ENCODE measurements at regions of chr10 and their contacts with region 1.

Region 1: GRCh38 chr10:74151056-74151878 is at the start of gene ADK:
- DNase-seq: peak in 8 of 9 donors; percentile 96 to 100 (median 99)
- ATAC-seq: peak; percentile 99
- H3K4me3 ChIP-seq: peak within 1 kb of the TSS; percentile 90
- H3K4me3 Mint-ChIP-seq: no peak within 1 kb of the TSS
- H3K27ac ChIP-seq: peak within 1 kb of the TSS; percentile 84
- H3K27ac Mint-ChIP-seq: peak within 1 kb of the TSS in 5 of 9 donors; percentile 8 to 78 (median 47)
- H3K4me1 ChIP-seq: peaks cover 17 to 23% of the 10 kb centered on the region in 2 donors
- H3K4me1 Mint-ChIP-seq: peaks cover 36 to 56% (median 47%) of the 10 kb centered on the region in 7 donors
- H3K27me3 ChIP-seq: no peaks in the 10 kb centered on the region
- H3K27me3 Mint-ChIP-seq: no peaks in the 10 kb centered on the region
- total RNA-seq, gene ADK: 20.7 to 32.6 (median 25.0) TPM

Region 2: GRCh38 chr10:73874267-73875138 is 276.8 kb before region 1 on chr10 and contains the start of gene CAMK2G:
- CTCF ChIA-PET with region 1: no interaction called
- POLR2A ChIA-PET with region 1: no interaction called
- intact Hi-C with region 1: loop called (anchors 2 kb)
- DNase-seq: peak; percentile 68 to 86 (median 83)
- ATAC-seq: peak; percentile 91
- H3K4me3 ChIP-seq: peak within 1 kb of the TSS; percentile 94
- H3K4me3 Mint-ChIP-seq: peak within 1 kb of the TSS; percentile 83 to 96 (median 90)
- H3K27ac ChIP-seq: peak within 1 kb of the TSS; percentile 86
- H3K27ac Mint-ChIP-seq: peak within 1 kb of the TSS; percentile 81 to 97 (median 94)
- H3K4me1 ChIP-seq: peaks cover 30 to 48% of the 10 kb centered on the region in 2 donors
- H3K4me1 Mint-ChIP-seq: peaks cover 41 to 84% (median 74%) of the 10 kb centered on the region in 7 donors
- H3K27me3 ChIP-seq: no peaks in the 10 kb centered on the region
- H3K27me3 Mint-ChIP-seq: peaks cover 0 to 2% (median 0%) of the 10 kb centered on the region in 5 donors
- total RNA-seq, gene CAMK2G: 44.6 to 70.9 (median 61.9) TPM

Region 3: GRCh38 chr10:73997787-73998622 is 153.3 kb before region 1 on chr10 and contains the start of gene VCL:
- CTCF ChIA-PET with region 1: no interaction called
- POLR2A ChIA-PET with region 1: interaction called, 4 read pairs
- intact Hi-C with region 1: loop called in 1 of 2 experiments (anchors 1 kb)
- DNase-seq: peak; percentile 90 to 97 (median 95)
- ATAC-seq: peak; percentile 99
- H3K4me3 ChIP-seq: peak within 1 kb of the TSS; percentile 71
- H3K4me3 Mint-ChIP-seq: peak within 1 kb of the TSS; percentile 83 to 100 (median 97)
- H3K27ac ChIP-seq: peak within 1 kb of the TSS; percentile 91
- H3K27ac Mint-ChIP-seq: peak within 1 kb of the TSS; percentile 83 to 99 (median 98)
- H3K4me1 ChIP-seq: peaks cover 19 to 22% of the 10 kb centered on the region in 2 donors
- H3K4me1 Mint-ChIP-seq: peaks cover 43 to 53% (median 48%) of the 10 kb centered on the region in 7 donors
- H3K27me3 ChIP-seq: no peaks in the 10 kb centered on the region
- H3K27me3 Mint-ChIP-seq: no peaks in the 10 kb centered on the region
- total RNA-seq, gene VCL: 9.0 to 67.7 (median 21.6) TPM

Region 4: GRCh38 chr10:74176380-74177139 is 25.3 kb after region 1 on chr10:
- CTCF ChIA-PET with region 1: interaction called, 3 read pairs
- POLR2A ChIA-PET with region 1: interaction called, 14 read pairs
- intact Hi-C with region 1: loop called (anchors 1 kb)
- DNase-seq: peak; percentile 90 to 96 (median 95)
- ATAC-seq: peak; percentile 98
- H3K4me3 ChIP-seq: peak overlapping the region; percentile 84
- H3K4me3 Mint-ChIP-seq: peak overlapping the region; percentile 87 to 98 (median 93)
- H3K27ac ChIP-seq: peak overlapping the region; percentile 86
- H3K27ac Mint-ChIP-seq: peak overlapping the region; percentile 94 to 98 (median 97)
- H3K4me1 ChIP-seq: peaks cover 6 to 7% of the 10 kb centered on the region in 2 donors
- H3K4me1 Mint-ChIP-seq: peaks cover 14 to 46% (median 40%) of the 10 kb centered on the region in 7 donors
- H3K27me3 ChIP-seq: no peaks in the 10 kb centered on the region
- H3K27me3 Mint-ChIP-seq: no peaks in the 10 kb centered on the region

Region 5: GRCh38 chr10:74213571-74214162 is 62.4 kb after region 1 on chr10:
- CTCF ChIA-PET with region 1: interaction called, 13 read pairs
- POLR2A ChIA-PET with region 1: interaction called, 12 read pairs
- intact Hi-C with region 1: loop called in 1 of 2 experiments (anchors 1 kb)
- DNase-seq: peak in 7 of 9 donors; percentile 26 to 60 (median 42)
- ATAC-seq: peak; percentile 78
- H3K4me3 ChIP-seq: no peak overlapping the region
- H3K4me3 Mint-ChIP-seq: no peak overlapping the region
- H3K27ac ChIP-seq: no peak overlapping the region
- H3K27ac Mint-ChIP-seq: peak overlapping the region in 1 of 9 donors; percentile 0
- H3K4me1 ChIP-seq: no peaks in the 10 kb centered on the region
- H3K4me1 Mint-ChIP-seq: peaks cover 7 to 16% (median 12%) of the 10 kb centered on the region in 7 donors
- H3K27me3 ChIP-seq: no peaks in the 10 kb centered on the region
- H3K27me3 Mint-ChIP-seq: no peaks in the 10 kb centered on the region

Region 6: GRCh38 chr10:74589226-74589673 is 438.0 kb after region 1 on chr10:
- CTCF ChIA-PET with region 1: no interaction called
- POLR2A ChIA-PET with region 1: no interaction called
- intact Hi-C with region 1: loop called in 1 of 2 experiments (anchors 1 kb)
- DNase-seq: peak; percentile 41 to 97 (median 92)
- ATAC-seq: peak; percentile 88
- H3K4me3 ChIP-seq: no peak overlapping the region
- H3K4me3 Mint-ChIP-seq: peak overlapping the region in 8 of 10 donors; percentile 6 to 75 (median 60)
- H3K27ac ChIP-seq: peak overlapping the region; percentile 69
- H3K27ac Mint-ChIP-seq: peak overlapping the region; percentile 70 to 97 (median 93)
- H3K4me1 ChIP-seq: peaks cover 37 to 42% of the 10 kb centered on the region in 2 donors
- H3K4me1 Mint-ChIP-seq: peaks cover 21 to 66% (median 59%) of the 10 kb centered on the region in 7 donors
- H3K27me3 ChIP-seq: no peaks in the 10 kb centered on the region
- H3K27me3 Mint-ChIP-seq: no peaks in the 10 kb centered on the region